Activated B cell treated with CpG ODN at 0.5 μM for 24 hours (primary cell): ENCODE measurements at regions of chr19 and their contacts with region 1.

Region 1: DNA sequence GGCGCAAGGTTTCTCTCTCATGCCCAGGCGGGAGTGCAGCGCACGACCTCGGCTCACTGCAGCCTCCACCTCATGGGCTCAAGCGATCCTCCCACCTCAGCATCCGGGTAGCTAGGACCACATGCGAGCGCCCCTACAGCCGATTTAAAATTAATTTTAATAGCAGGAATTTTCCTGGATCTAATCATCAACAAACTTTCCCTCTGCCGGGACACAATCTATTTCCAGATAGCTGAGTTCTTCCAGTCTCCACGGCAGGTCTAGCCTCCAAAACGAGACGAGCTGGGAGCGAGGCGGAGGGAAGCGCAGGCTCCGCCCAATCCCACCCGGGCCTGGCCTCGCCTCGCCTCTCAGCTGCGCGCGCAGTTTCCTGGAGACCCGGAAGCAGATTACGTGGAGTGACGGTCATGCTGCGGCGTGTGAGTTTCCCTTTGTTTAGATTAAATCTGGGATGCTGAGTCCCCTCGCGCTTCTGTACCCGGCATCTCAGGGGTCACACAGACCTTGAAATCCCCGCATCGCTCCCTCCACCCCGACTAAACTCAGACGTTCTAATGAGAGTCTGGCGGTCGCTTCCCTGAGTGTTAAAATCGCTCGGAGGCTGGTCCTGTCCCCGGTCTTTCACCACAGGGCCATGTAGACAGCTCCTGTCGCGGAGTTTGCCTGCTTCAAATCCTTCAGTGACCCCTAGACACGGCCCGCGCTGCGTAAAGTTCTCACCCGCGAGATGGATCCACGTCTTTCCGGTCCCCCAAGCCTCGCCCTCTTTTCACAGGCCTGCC is at the start of gene ZNF880:
- DNase-seq: peak; percentile 86
- ATAC-seq: peak; percentile 98
- H3K4me3 Mint-ChIP-seq: peak within 1 kb of the TSS; percentile 95
- H3K27ac Mint-ChIP-seq: peak within 1 kb of the TSS; percentile 97
- H3K4me1 Mint-ChIP-seq: peaks cover 17% of the 10 kb centered on the region
- H3K27me3 Mint-ChIP-seq: no peaks in the 10 kb centered on the region
- CTCF ChIP-seq: no peak
- total RNA-seq, gene ZNF880: 28.0 and 29.5 TPM in 2 replicates

Region 2: GRCh38 chr19:52155596-52156359 is 214.0 kb before region 1 on chr19:
- CTCF ChIA-PET with region 1: no interaction called
- POLR2A ChIA-PET with region 1: interaction called, 10 read pairs
- intact Hi-C with region 1: no loop called
- DNase-seq: no peak
- ATAC-seq: no peak
- H3K4me3 Mint-ChIP-seq: no peak overlapping the region
- H3K27ac Mint-ChIP-seq: no peak overlapping the region
- H3K4me1 Mint-ChIP-seq: no peaks in the 10 kb centered on the region
- H3K27me3 Mint-ChIP-seq: no peaks in the 10 kb centered on the region
- CTCF ChIP-seq: no peak

Region 3: DNA sequence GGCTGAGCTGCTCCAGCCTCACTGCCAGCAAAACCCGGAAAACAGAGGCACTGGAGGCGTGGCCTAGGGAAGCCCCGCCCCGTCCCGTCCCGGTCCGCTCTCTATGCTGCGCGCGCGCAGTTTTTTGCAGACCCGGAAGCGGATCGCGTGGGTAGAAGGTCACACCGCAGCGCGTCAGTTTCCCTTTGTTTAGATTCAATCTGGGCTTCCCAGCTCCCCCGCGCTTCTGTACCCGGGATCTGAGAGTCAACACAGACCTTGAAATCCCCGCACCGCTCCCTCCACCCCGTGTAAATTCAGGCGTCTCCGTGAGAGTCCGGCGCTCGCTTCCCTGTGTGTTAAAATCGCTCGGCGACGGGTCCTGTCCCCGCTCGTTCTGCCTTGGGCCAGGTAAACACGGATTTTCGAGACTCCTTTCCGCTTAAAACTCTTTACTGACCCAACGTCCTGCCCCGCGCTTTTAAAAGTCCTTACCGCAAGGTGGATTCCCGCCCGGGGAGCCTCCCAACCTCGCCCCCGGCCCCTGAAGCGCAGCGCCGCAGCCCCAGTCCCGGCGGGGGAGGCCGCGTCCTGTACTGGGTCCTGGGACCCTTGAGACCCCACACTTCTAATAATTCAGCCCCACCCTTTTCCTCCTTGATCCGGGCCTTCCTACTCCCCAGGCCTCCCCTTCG is 33.5 kb before region 1 on chr19 and contains the start of gene ZNF610:
- CTCF ChIA-PET with region 1: no interaction called
- POLR2A ChIA-PET with region 1: interaction called, 7 read pairs
- intact Hi-C with region 1: loop called (anchors 2 kb)
- DNase-seq: peak; percentile 84
- ATAC-seq: peak; percentile 96
- H3K4me3 Mint-ChIP-seq: peak within 1 kb of the TSS; percentile 97
- H3K27ac Mint-ChIP-seq: peak within 1 kb of the TSS; percentile 93
- H3K4me1 Mint-ChIP-seq: peaks cover 14% of the 10 kb centered on the region
- H3K27me3 Mint-ChIP-seq: no peaks in the 10 kb centered on the region
- CTCF ChIP-seq: no peak
- total RNA-seq, gene ZNF610: 1.1 and 2.0 TPM in 2 replicates

Region 4: GRCh38 chr19:52397310-52398080 is 27.7 kb after region 1 on chr19 and contains the start of gene ZNF528:
- CTCF ChIA-PET with region 1: no interaction called
- POLR2A ChIA-PET with region 1: interaction called, 19 read pairs
- intact Hi-C with region 1: loop called (anchors 1 kb)
- DNase-seq: peak; percentile 91
- ATAC-seq: peak; percentile 99
- H3K4me3 Mint-ChIP-seq: peak within 1 kb of the TSS; percentile 90
- H3K27ac Mint-ChIP-seq: peak within 1 kb of the TSS; percentile 91
- H3K4me1 Mint-ChIP-seq: peaks cover 18% of the 10 kb centered on the region
- H3K27me3 Mint-ChIP-seq: no peaks in the 10 kb centered on the region
- CTCF ChIP-seq: no peak
- total RNA-seq, gene ZNF528: 29.8 and 40.3 TPM in 2 replicates

Region 5: GRCh38 chr19:52453324-52454094 is 83.8 kb after region 1 on chr19 and contains the start of gene ZNF578:
- CTCF ChIA-PET with region 1: no interaction called
- POLR2A ChIA-PET with region 1: no interaction called
- intact Hi-C with region 1: no loop called
- DNase-seq: peak; percentile 28
- ATAC-seq: peak; percentile 83
- H3K4me3 Mint-ChIP-seq: peak within 1 kb of the TSS; percentile 86
- H3K27ac Mint-ChIP-seq: peak within 1 kb of the TSS; percentile 61
- H3K4me1 Mint-ChIP-seq: peaks cover 14% of the 10 kb centered on the region
- H3K27me3 Mint-ChIP-seq: no peaks in the 10 kb centered on the region
- CTCF ChIP-seq: no peak
- total RNA-seq, gene ZNF578: 2.6 and 2.8 TPM in 2 replicates